ENCODE measurements at regions of chr1 and their contacts with region 1.

Region 1: GRCh38 chr1:168991667-168992475 is 114.6 kb upstream of the ATP1B1 start:
- DNase-seq: peak; percentile 41
- ATAC-seq: peak; percentile 95
- H3K4me3 Mint-ChIP-seq: no peak overlapping the region
- H3K27ac Mint-ChIP-seq: peak overlapping the region; percentile 81
- H3K4me1 Mint-ChIP-seq: peaks cover 18% of the 10 kb centered on the region
- H3K27me3 Mint-ChIP-seq: peaks cover 3% of the 10 kb centered on the region

Region 2: DNA sequence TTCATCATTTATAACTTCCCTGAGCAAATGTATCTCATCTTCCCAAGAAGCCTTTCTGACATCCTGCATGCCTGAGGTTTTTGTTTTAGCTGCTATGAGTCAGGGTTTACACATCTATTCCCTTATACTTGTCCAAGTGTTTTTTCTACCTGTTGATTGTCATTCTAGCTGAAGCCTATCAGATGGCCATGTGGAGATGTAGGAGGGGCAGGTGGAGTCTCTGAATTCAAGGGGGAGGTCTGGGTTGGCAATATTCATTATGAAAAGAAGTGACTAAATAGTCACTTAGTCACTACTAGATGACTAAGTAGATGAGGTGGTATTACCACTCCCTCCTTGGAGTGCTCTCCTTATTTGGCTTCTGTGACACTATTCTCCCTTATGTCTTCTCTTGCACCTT is 363.1 kb before region 1 on chr1:
- CTCF ChIA-PET with region 1: no interaction called
- POLR2A ChIA-PET with region 1: no interaction called
- intact Hi-C with region 1: loop called in 1 of 2 experiments (anchors 5 kb)
- DNase-seq: peak; percentile 39
- ATAC-seq: peak; percentile 100
- H3K4me3 Mint-ChIP-seq: no peak overlapping the region
- H3K27ac Mint-ChIP-seq: peak overlapping the region; percentile 49
- H3K4me1 Mint-ChIP-seq: peaks cover 9% of the 10 kb centered on the region
- H3K27me3 Mint-ChIP-seq: peaks cover 23% of the 10 kb centered on the region

Region 3: DNA sequence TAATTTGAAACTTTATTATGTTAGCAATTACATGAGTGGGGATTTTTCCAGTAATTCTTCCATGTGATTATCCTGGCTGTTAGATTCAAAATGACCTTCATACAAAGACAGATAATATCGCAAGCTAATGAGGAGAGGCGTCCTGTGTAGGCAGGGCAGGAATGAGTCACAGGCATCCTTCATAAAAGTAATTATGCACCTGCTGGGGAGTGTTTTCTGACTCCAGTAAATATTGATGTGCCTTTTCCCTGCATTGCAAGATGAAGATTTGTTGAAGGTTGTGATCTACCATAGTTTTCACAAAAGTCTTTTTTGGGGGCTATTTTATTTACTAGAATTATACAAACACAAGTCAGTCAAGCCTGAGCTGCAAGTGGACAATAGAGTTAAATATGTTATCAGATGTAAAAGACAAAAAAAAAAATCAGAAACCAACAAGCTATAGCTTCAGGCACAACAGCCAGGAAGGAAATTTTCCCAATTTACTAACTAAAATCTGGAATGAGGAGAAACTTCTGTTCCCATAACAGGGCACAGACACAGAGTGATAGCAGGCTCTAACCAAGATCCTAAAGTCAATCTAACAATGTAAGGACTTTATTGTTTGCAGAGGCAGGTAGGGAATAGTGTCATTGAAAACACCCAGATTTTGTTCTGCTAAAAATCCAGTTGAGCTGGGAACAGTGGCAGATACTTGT is 52.2 kb before region 1 on chr1:
- CTCF ChIA-PET with region 1: no interaction called
- POLR2A ChIA-PET with region 1: no interaction called
- intact Hi-C with region 1: no loop called
- DNase-seq: no peak
- ATAC-seq: no peak
- H3K4me3 Mint-ChIP-seq: no peak overlapping the region
- H3K27ac Mint-ChIP-seq: no peak overlapping the region
- H3K4me1 Mint-ChIP-seq: no peaks in the 10 kb centered on the region
- H3K27me3 Mint-ChIP-seq: peaks cover 23% of the 10 kb centered on the region

Region 4: DNA sequence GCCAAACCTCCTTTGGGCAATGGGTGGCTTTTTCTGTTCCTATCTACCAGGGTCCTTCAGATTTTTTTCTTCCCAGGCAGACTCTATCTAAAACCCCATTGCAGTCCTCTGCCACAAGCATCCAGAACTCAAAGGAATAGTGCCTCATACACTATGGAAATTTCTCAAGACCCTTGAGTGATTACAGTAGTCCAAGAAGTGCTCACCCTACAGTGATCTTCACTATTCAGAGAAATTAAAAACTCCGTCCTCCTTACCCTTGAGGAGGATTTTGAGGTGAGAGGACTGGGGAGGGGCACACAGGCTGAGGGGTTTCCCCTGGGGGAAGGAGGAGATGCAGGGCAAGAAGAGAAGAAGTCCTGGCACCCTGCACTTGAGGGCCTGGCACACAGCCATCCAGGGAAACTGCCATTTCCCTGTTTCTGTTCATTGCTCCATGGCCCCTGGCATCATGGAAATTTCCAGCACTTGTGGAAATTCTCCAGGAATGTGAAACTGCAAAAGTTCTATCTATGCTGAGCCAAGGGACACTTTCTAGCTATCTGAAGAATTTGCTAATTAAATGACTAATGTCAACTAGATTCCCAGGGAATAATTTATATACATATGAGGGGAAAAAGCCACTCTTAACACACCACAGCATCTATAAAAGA is 12.1 kb after region 1 on chr1:
- CTCF ChIA-PET with region 1: no interaction called
- POLR2A ChIA-PET with region 1: no interaction called
- intact Hi-C with region 1: no loop called
- DNase-seq: no peak
- ATAC-seq: no peak
- H3K4me3 Mint-ChIP-seq: no peak overlapping the region
- H3K27ac Mint-ChIP-seq: no peak overlapping the region
- H3K4me1 Mint-ChIP-seq: no peaks in the 10 kb centered on the region
- H3K27me3 Mint-ChIP-seq: no peaks in the 10 kb centered on the region

Region 5: GRCh38 chr1:169106095-169106920 is 114.4 kb after region 1 on chr1 and contains the start of gene ATP1B1:
- CTCF ChIA-PET with region 1: no interaction called
- POLR2A ChIA-PET with region 1: no interaction called
- intact Hi-C with region 1: no loop called
- DNase-seq: peak; percentile 88
- ATAC-seq: peak; percentile 91
- H3K4me3 Mint-ChIP-seq: peak within 1 kb of the TSS; percentile 78
- H3K27ac Mint-ChIP-seq: peak within 1 kb of the TSS; percentile 63
- H3K4me1 Mint-ChIP-seq: peaks cover 41% of the 10 kb centered on the region
- H3K27me3 Mint-ChIP-seq: peaks cover 18% of the 10 kb centered on the region
- total RNA-seq, gene ATP1B1: 2.9 to 3.3 TPM